ENCODE measurements at regions of chr9 and their contacts with region 1.

Region 1: GRCh38 chr9:4315582-4316215 is 15.8 kb upstream of the GLIS3 start:
- DNase-seq: peak; percentile 73 to 84
- ATAC-seq: peak; percentile 100
- H3K4me3 ChIP-seq: no peak overlapping the region
- H3K27ac ChIP-seq: peak overlapping the region in 1 of 2 experiments; percentile 4; a peak in 2 of 6 replicates
- H3K4me1 ChIP-seq: no peaks in the 10 kb centered on the region
- CTCF ChIP-seq: peak; percentile 94
- EP300 ChIP-seq: no peak
- POLR2A ChIP-seq: no peak
- RAD21 ChIP-seq: peak; percentile 95 to 97

Region 2: GRCh38 chr9:3894772-3895171 is 420.9 kb before region 1 on chr9:
- CTCF ChIA-PET with region 1: no interaction called
- POLR2A ChIA-PET with region 1: no interaction called
- DNase-seq: no peak
- ATAC-seq: no peak
- H3K4me3 ChIP-seq: no peak overlapping the region
- H3K27ac ChIP-seq: no peak overlapping the region
- H3K4me1 ChIP-seq: no peaks in the 10 kb centered on the region
- CTCF ChIP-seq: no peak
- EP300 ChIP-seq: no peak
- POLR2A ChIP-seq: no peak
- RAD21 ChIP-seq: no peak

Region 3: GRCh38 chr9:4027606-4028005 is 288.1 kb before region 1 on chr9:
- CTCF ChIA-PET with region 1: no interaction called
- POLR2A ChIA-PET with region 1: no interaction called
- DNase-seq: no peak
- ATAC-seq: no peak
- H3K4me3 ChIP-seq: no peak overlapping the region
- H3K27ac ChIP-seq: no peak overlapping the region
- H3K4me1 ChIP-seq: peaks cover 13% of the 10 kb centered on the region
- CTCF ChIP-seq: no peak
- EP300 ChIP-seq: no peak
- POLR2A ChIP-seq: no peak
- RAD21 ChIP-seq: no peak

Region 4: DNA sequence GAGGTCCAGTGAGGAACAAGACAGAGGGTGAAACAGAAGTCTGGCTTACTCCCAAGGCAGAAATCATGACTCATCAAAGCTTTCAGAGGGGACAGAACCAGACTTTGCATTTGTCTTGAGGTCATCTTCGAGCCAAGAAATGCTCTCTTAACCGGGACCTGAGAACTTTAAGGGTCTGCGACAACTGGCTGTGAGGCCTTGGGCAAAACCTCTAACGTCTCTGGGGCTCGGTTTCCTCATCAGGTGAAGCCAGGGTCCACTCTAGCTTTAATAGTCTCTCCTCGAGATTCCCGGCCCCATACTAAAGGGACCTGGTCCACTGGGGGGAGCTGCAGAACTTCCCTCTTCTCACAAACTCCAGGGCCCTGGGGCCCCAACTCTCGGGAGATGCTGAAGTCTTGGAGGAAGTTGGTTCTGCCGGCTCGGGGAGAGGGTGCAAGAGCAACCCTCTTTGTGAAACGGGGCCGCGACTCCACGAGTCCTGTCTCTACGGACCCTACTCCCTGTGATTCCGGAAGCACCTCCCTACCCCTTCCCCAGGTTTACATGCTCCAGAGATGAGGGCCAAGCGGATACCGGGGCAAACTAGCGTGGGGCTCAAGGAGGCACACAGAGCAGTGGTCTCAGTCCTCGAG is 18.4 kb before region 1 on chr9:
- CTCF ChIA-PET with region 1: interaction called, 77 read pairs
- POLR2A ChIA-PET with region 1: interaction called, 4 read pairs
- DNase-seq: peak; percentile 87 to 92
- ATAC-seq: peak; percentile 60 to 73
- H3K4me3 ChIP-seq: peak overlapping the region; percentile 77
- H3K27ac ChIP-seq: peak overlapping the region; percentile 95 to 97
- H3K4me1 ChIP-seq: peaks cover 64% of the 10 kb centered on the region
- CTCF ChIP-seq: peak; percentile 64
- EP300 ChIP-seq: no peak
- POLR2A ChIP-seq: no peak; the same call in 1 of the 2 replicates
- RAD21 ChIP-seq: peak; percentile 60 to 65

Region 5: DNA sequence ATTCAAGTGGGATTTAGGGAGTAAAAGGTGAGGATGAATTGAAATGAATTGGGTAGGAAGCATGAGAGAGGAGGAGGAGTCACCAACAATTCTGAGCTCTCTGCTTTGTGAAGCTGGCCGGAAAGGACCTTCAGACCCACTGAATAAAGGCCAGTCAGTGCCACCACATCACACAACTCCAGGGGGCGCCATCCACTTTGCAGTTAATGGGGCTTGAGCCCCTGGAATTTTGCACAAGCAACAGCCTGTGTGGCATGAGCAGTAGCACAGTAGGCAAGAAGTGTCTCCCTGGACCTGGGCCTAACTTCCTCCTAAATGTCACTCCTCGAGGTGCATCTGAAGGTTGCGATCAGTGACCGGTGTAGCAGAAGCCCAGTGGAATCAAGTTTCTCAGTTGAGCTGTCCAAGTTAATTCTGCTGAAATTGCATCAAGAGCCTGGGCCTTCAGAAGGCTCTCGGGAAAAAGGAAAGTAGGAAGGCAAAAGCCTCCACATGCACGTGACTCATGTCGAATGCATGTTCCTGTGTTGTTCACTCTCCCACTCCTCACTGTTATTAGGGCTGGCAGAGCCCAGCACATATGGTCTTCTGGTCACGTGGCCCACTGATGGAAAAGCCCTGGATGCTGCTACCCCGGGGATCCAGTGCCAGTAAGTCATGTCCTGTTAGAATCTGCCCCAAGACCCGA is 11.9 kb after region 1 on chr9:
- CTCF ChIA-PET with region 1: interaction called, 61 read pairs
- POLR2A ChIA-PET with region 1: no interaction called
- DNase-seq: no peak
- ATAC-seq: peak; percentile 38 to 40; a peak in 5 of 6 replicates
- H3K4me3 ChIP-seq: no peak overlapping the region
- H3K27ac ChIP-seq: no peak overlapping the region
- H3K4me1 ChIP-seq: peaks cover 7% of the 10 kb centered on the region; the same call in 1 of the 3 replicates
- CTCF ChIP-seq: no peak
- EP300 ChIP-seq: no peak
- POLR2A ChIP-seq: no peak
- RAD21 ChIP-seq: no peak

Region 6: DNA sequence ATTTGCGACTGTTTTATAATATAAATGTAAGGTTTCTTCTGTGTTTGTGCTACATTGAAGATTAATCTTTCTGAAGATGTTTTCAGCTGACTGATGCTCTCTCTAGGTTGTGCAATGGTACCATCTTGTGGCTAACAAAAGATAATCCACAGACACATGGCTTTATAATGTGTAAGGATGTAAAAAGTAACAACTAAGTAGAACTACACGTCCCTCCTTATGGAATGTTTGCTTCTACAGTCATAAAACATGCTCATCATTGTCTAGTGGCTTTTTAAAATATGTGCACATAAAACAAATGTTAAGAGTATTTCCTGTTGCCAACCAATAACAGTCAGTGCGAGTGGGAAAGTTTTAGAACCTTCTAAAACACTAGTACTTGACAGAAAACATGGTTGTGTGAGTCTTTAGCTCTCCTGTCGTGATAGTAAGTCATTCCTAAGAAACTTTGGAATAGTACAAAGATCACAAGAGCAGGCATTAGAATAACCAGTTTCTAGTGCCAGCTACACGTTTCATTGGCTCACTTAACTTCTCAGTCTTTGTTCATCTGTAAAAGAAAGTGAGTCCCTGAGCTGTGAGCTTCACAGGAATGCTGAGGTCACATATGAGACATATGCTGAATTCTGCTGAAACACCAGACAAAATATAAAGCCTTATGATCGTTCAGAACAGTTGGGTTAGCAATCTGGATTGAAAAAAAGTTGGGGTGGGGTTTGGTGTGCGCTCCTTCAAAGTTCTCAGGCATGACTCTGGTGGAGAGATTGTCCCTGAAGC is 59.9 kb after region 1 on chr9:
- CTCF ChIA-PET with region 1: interaction called, 28 read pairs
- POLR2A ChIA-PET with region 1: no interaction called
- DNase-seq: peak; percentile 52 to 59
- ATAC-seq: peak; percentile 79 to 90; a peak in 5 of 6 replicates
- H3K4me3 ChIP-seq: no peak overlapping the region
- H3K27ac ChIP-seq: no peak overlapping the region
- H3K4me1 ChIP-seq: no peaks in the 10 kb centered on the region
- CTCF ChIP-seq: peak; percentile 90
- EP300 ChIP-seq: no peak
- POLR2A ChIP-seq: no peak
- RAD21 ChIP-seq: peak; percentile 90 to 94